Pancreas (tissue), 10 donors: ENCODE measurements at regions of chr3 and their contacts with region 1.

Region 1: GRCh38 chr3:194166682-194167479 is 30.9 kb downstream of the HES1 start:
- DNase-seq: no peak
- ATAC-seq: peak; percentile 49 to 67 (median 58)
- H3K4me3 ChIP-seq: no peak overlapping the region
- H3K27ac ChIP-seq: peak overlapping the region in 2 of 4 donors; percentile 15 to 41
- H3K4me1 ChIP-seq: peaks cover 4 to 14% (median 11%) of the 10 kb centered on the region in 3 donors
- H3K27me3 ChIP-seq: no peaks in the 10 kb centered on the region
- CTCF ChIP-seq: no peak

Region 2: DNA sequence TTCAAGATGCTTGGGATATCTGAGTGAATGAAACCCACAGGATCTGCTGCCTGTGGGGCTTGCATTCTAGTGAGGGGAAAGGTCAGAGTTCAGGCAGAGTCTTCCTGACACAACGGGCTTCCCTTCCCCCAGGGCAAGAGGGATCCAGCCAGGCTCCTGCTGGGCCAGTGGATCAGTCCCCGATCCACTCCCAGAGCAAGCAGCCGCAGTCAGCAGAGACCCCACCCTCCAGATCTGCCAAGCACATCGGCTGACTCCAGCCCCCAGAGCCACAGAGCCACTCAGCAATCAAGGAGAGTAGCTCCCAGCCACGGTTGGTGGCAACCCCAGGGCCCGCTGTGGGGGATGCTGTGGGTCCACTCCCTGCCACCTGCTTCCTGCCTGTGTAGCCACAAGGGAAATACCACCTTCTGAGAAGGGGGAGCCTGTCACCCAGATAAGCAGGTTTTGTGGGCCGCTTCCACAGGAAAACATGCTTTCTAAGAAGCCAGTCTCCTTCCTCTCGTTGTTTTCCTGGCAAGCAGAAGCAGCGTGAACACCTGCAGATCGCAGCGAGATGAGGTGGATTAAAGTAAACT is 139.3 kb after region 1 on chr3:
- intact Hi-C with region 1: loop called in 1 of 3 experiments (anchors 10 kb)
- DNase-seq: peak in 1 of 6 donors; percentile 38
- ATAC-seq: no peak
- H3K4me3 ChIP-seq: no peak overlapping the region
- H3K27ac ChIP-seq: no peak overlapping the region
- H3K4me1 ChIP-seq: no peaks in the 10 kb centered on the region
- H3K27me3 ChIP-seq: no peaks in the 10 kb centered on the region
- CTCF ChIP-seq: no peak

Region 3: GRCh38 chr3:194536871-194537637 is 370.2 kb after region 1 on chr3:
- intact Hi-C with region 1: no loop called
- DNase-seq: peak; percentile 65 to 87 (median 82)
- ATAC-seq: peak; percentile 79 to 89 (median 86)
- H3K4me3 ChIP-seq: no peak overlapping the region
- H3K27ac ChIP-seq: peak overlapping the region; percentile 47 to 73 (median 67)
- H3K4me1 ChIP-seq: peaks cover 10 to 17% (median 12%) of the 10 kb centered on the region in 3 donors
- H3K27me3 ChIP-seq: no peaks in the 10 kb centered on the region
- CTCF ChIP-seq: no peak